ENCODE measurements at regions of chr10 and their contacts with region 1.

Region 1: DNA sequence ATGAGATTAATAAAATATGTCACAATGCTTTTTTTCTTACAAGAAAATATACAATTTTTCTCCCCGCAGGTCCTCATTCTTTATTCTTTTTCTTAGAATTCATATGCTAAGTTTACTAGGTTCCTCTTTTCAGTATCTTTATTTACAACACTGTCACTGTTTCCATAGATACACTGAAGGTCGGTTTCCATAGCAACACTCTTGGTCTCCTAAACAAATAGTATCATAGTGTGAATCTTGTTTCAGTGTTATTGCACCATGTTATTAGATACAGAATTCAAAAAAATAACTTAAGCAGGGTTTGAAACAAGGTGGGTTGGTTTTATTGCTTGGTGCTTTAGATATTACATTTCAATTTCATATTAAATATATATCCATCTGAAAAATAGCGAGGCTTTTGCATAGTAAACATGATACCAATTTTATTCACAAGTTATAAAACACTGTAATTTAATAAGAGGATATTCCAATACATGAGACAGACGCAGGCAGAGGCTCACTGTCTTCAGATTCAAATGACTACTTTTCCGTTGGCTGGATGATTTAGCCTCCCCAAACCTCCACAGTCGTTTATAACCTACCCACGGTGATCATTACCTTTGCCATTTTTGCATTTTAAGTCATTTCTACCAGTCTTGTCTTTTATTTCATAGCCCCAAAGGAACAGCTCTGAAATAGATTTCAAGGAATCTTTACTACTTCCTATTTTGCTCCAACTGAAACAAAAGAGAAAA is 88.9 kb upstream of the KLF6 start:
- DNase-seq: no peak
- H3K4me3 Mint-ChIP-seq: no peak overlapping the region
- H3K27ac Mint-ChIP-seq: peak overlapping the region; percentile 33
- H3K4me1 Mint-ChIP-seq: peaks cover 61% of the 10 kb centered on the region
- H3K27me3 Mint-ChIP-seq: no peaks in the 10 kb centered on the region

Region 2: GRCh38 chr10:3852147-3852904 is 21.6 kb before region 1 on chr10:
- CTCF ChIA-PET with region 1: interaction called, 4 read pairs
- POLR2A ChIA-PET with region 1: interaction called, 17 read pairs
- DNase-seq: peak; percentile 76
- H3K4me3 Mint-ChIP-seq: peak overlapping the region; percentile 15
- H3K27ac Mint-ChIP-seq: peak overlapping the region; percentile 75
- H3K4me1 Mint-ChIP-seq: peaks cover 36% of the 10 kb centered on the region
- H3K27me3 Mint-ChIP-seq: no peaks in the 10 kb centered on the region

Region 3: GRCh38 chr10:3887885-3888476 is 14.1 kb after region 1 on chr10:
- CTCF ChIA-PET with region 1: no interaction called
- POLR2A ChIA-PET with region 1: interaction called, 25 read pairs
- DNase-seq: peak; percentile 72
- H3K4me3 Mint-ChIP-seq: peak overlapping the region; percentile 36
- H3K27ac Mint-ChIP-seq: peak overlapping the region; percentile 84
- H3K4me1 Mint-ChIP-seq: peaks cover 57% of the 10 kb centered on the region
- H3K27me3 Mint-ChIP-seq: no peaks in the 10 kb centered on the region